PC-9 (cell line): ENCODE measurements at regions of chr4 and their contacts with region 1.

Region 1: GRCh38 chr4:109877400-109877799 is 29.5 kb downstream of the LRIT3 start:
- DNase-seq: no peak
- H3K4me3 ChIP-seq: no peak overlapping the region
- H3K27ac ChIP-seq: no peak overlapping the region
- H3K4me1 ChIP-seq: no peaks in the 10 kb centered on the region
- H3K27me3 ChIP-seq: no peaks in the 10 kb centered on the region
- CTCF ChIP-seq: no peak

Region 2: GRCh38 chr4:109548655-109549054 is 328.7 kb before region 1 on chr4:
- CTCF ChIA-PET with region 1: no interaction called
- POLR2A ChIA-PET with region 1: no interaction called
- intact Hi-C with region 1: no loop called
- DNase-seq: no peak
- H3K4me3 ChIP-seq: no peak overlapping the region
- H3K27ac ChIP-seq: no peak overlapping the region
- H3K4me1 ChIP-seq: no peaks in the 10 kb centered on the region
- H3K27me3 ChIP-seq: no peaks in the 10 kb centered on the region
- CTCF ChIP-seq: no peak

Region 3: DNA sequence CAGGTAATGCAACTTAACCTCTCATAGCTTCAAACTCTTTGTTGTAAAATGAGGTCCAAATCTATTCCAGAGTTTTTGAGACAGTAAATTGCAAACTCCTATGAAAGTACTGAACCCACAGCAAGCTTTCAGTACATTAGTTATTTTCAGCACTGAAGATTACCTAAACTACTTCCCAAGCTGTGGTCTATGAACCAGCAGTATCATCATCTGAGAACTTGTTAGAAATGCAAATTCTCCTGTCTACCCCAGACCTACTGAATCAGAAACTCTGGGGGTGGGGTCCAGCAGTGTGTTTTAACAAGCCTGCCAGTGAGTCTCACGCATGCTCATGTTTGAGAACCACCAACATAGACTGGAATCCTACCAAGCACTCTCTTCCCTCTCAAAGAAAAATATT is 168.4 kb before region 1 on chr4:
- CTCF ChIA-PET with region 1: interaction called, 16 read pairs
- POLR2A ChIA-PET with region 1: interaction called, 6 read pairs
- intact Hi-C with region 1: no loop called
- DNase-seq: no peak
- H3K4me3 ChIP-seq: no peak overlapping the region
- H3K27ac ChIP-seq: no peak overlapping the region
- H3K4me1 ChIP-seq: no peaks in the 10 kb centered on the region; the same call in 1 of the 2 replicates
- H3K27me3 ChIP-seq: no peaks in the 10 kb centered on the region
- CTCF ChIP-seq: no peak